ENCODE measurements at regions of chrX and their contacts with region 1.

Region 1: GRCh38 chrX:13051529-13052172 is 7.2 kb upstream of the FAM9C start:
- DNase-seq: no peak
- ATAC-seq: peak; percentile 71
- H3K4me3 Mint-ChIP-seq: peak overlapping the region; percentile 19
- H3K27ac Mint-ChIP-seq: peak overlapping the region; percentile 82
- H3K4me1 Mint-ChIP-seq: peaks cover 57% of the 10 kb centered on the region
- H3K27me3 Mint-ChIP-seq: no peaks in the 10 kb centered on the region
- CTCF ChIP-seq: no peak

Region 2: DNA sequence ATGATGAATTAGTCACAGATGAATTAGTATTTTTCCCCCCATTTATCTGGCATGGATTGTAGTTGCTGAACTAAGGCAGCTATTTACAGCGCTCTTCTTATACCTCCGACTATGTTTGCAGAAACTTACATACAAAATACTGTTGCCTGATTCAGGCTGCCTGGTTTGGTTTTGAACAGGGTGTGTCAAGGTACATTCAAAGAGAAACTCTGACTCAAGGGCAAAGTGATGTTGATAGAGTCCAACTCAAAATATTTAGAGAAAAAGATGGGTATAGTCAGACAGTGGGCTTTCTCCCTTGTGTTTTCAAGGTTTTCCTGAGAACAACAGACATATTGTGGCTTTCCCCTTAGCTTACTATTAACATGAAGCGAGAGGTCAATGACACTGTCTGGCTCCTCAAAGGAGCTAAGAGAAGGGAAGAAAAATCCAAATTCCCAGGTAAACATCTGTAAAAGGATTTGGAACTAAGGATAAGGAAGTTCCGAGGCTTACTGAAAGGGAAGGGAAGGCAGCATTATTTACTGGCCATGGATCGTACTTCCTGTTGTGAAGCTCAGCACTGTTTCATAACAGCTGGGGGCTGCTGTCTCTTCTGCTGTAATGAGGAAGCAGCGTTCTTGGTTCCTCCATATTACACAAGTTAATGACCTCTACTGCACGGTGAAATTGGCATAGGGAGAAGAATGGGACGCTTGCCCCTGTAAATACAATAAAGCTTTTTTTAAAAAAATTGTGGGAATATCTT is 38.1 kb before region 1 on chrX:
- CTCF ChIA-PET with region 1: no interaction called
- POLR2A ChIA-PET with region 1: interaction called, 3 read pairs
- intact Hi-C with region 1: loop called (anchors 2 kb)
- DNase-seq: no peak
- ATAC-seq: peak; percentile 90
- H3K4me3 Mint-ChIP-seq: peak overlapping the region; percentile 36
- H3K27ac Mint-ChIP-seq: peak overlapping the region; percentile 64
- H3K4me1 Mint-ChIP-seq: peaks cover 65% of the 10 kb centered on the region
- H3K27me3 Mint-ChIP-seq: no peaks in the 10 kb centered on the region
- CTCF ChIP-seq: no peak

Region 3: GRCh38 chrX:13263560-13264251 is 212.1 kb after region 1 on chrX:
- CTCF ChIA-PET with region 1: no interaction called
- POLR2A ChIA-PET with region 1: no interaction called
- intact Hi-C with region 1: no loop called
- DNase-seq: no peak
- ATAC-seq: peak; percentile 92
- H3K4me3 Mint-ChIP-seq: peak overlapping the region; percentile 57
- H3K27ac Mint-ChIP-seq: no peak overlapping the region
- H3K4me1 Mint-ChIP-seq: peaks cover 18% of the 10 kb centered on the region
- H3K27me3 Mint-ChIP-seq: no peaks in the 10 kb centered on the region
- CTCF ChIP-seq: no peak

Measured in activated B cell treated with CpG ODN at 0.5 μM for 24 hours (primary cell).